PC-3 (cell line): ENCODE measurements at regions of chr5 and their contacts with region 1.

Region 1: DNA sequence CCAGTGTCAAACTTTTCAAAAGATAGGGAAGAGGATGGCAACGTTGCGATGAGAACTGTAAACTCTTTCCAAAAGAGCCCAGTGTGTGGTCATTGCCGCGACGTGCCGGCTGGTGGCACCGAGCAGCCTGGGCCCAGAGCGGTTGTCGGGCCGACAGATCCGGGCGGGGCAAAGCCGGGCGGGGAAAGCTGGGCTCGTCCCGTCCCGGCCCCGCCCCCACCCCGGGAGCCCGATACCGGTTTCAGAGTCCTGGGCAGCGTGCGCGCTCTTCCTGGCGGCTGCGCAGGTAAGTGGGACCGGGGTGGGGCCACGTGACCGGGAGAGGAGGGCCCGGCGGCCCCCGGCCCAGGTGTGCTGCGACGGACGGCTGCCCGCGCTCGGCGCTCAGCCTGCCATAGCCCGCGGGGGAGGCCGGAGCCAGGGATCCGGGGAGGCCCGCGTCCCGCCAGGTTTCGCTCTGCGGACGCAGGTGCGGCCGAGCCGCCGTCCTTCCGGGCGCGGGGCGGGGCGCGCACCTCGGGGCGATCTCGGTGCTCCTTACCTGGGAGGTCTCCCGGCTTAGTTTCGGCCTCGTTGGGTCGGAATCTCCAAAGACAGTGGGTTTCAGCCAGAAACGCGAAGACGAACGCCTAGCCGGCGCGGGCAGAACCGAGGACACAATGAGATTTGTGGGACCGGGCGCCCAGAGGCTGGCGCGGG is at the start of gene MARVELD2:
- DNase-seq: peak; percentile 90
- ATAC-seq: peak; percentile 95
- H3K4me3 ChIP-seq: peak within 1 kb of the TSS; percentile 85
- H3K27ac ChIP-seq: peak within 1 kb of the TSS; percentile 83
- H3K4me1 ChIP-seq: peaks cover 7% of the 10 kb centered on the region; the same call in 1 of the 2 replicates
- H3K27me3 ChIP-seq: no peaks in the 10 kb centered on the region
- CTCF ChIP-seq: peak; percentile 55
- total RNA-seq, gene MARVELD2: 12.5 and 15.4 TPM in 2 replicates

Region 2: DNA sequence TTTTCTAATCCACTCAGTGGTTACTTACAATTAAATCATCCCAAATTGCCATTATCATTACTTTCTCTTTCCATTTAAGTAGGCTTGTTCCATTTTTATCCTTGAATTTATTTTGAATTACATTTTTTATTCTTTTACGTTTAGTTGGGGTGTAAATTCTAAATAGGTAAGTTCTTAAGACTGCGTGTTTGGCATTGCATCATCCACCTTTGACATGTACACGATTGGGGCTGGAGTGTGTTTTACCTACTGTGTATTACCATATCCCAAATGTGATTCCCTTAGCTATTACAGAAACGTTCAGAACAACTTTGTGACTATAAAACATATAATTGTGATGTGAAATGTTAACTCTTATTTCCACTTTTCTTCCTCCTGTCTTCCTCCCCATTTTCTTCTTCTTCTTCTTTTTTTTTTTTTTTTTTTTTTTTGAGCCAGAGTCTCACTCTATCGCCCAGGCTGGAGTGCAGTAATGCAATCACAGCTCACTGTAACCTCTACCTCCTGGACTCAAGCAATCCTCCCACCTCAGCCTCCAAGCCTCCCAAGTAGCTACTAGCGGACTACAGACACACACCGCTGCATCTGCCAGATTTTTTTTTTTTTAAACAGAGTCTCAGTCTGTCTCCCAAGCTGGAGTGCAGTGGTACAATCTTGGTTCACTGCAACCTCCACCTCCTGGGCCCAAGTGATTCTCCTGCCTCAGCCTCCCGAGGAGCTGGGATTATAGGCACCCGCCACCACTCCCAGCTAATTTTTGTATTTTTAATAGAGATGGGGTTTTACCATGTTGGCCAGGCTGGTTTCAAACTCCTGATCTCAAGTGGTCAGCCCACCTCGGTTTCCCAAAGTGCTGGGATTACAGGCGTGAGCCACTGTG is 16.6 kb after region 1 on chr5:
- CTCF ChIA-PET with region 1: interaction called, 11 read pairs
- POLR2A ChIA-PET with region 1: no interaction called
- intact Hi-C with region 1: no loop called
- DNase-seq: no peak
- ATAC-seq: no peak
- H3K4me3 ChIP-seq: no peak overlapping the region
- H3K27ac ChIP-seq: no peak overlapping the region
- H3K4me1 ChIP-seq: no peaks in the 10 kb centered on the region
- H3K27me3 ChIP-seq: no peaks in the 10 kb centered on the region
- CTCF ChIP-seq: no peak